ENCODE measurements at regions of chr16 and their contacts with region 1.

Region 1: DNA sequence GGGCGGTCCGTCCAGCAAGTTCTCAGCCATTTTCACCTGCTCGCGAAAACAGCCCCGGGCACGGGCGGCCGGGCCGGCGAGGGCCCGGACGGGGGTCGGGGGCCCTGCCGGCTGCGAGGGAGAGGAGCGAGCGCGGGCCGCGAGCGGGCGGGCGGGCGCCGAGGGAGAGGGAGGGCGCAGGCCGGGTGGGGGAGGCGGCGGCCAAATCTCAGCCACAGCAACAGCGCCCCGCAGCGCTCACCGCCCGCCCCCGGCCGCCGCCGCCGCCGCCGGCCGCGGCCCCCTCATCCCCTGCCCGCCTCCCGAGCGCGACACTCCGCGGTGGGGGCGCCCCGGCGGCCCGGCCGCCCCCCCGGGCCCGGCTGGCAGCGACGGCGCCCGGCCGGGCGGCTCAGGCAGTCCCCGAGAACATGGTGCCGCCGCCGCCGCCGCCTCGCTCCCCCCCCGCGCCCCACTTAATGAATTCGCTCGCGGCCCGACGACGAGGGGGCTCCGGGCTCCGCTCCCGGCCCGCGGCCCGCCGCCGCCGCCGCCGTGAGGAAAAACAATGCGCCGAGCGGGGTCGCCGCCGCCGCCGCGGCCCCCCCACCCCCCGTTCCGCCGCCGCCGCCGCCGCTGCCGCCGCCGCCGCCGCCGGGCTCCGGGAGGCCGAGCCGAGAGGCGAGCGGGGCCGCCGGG is 487 bp downstream of the CREBBP start:
- DNase-seq: peak; percentile 52
- ATAC-seq: peak; percentile 73
- H3K4me3 ChIP-seq: peak overlapping the region; percentile 76
- H3K27ac ChIP-seq: peak overlapping the region; percentile 66; the same call in 1 of the 2 replicates
- H3K4me1 ChIP-seq: peaks cover 18% of the 10 kb centered on the region
- H3K27me3 ChIP-seq: no peaks in the 10 kb centered on the region
- CTCF ChIP-seq: peak; percentile 49
- POLR2A ChIP-seq: no peak
- RAD21 ChIP-seq: peak; percentile 46

Region 2: GRCh38 chr16:3690470-3690928 is 189.5 kb before region 1 on chr16:
- CTCF ChIA-PET with region 1: interaction called, 4 read pairs
- POLR2A ChIA-PET with region 1: no interaction called
- dilution Hi-C with region 1: no loop called
- in situ Hi-C with region 1: no loop called
- intact Hi-C with region 1: loop called (anchors 1 kb)
- DNase-seq: peak; percentile 94
- ATAC-seq: peak; percentile 98
- H3K4me3 ChIP-seq: no peak overlapping the region
- H3K27ac ChIP-seq: no peak overlapping the region
- H3K4me1 ChIP-seq: peaks cover 6% of the 10 kb centered on the region
- H3K27me3 ChIP-seq: no peaks in the 10 kb centered on the region
- CTCF ChIP-seq: peak; percentile 96
- POLR2A ChIP-seq: no peak
- RAD21 ChIP-seq: peak; percentile 84

Region 3: GRCh38 chr16:3745751-3746355 is 134.2 kb before region 1 on chr16:
- CTCF ChIA-PET with region 1: no interaction called
- POLR2A ChIA-PET with region 1: no interaction called
- dilution Hi-C with region 1: no loop called
- in situ Hi-C with region 1: no loop called
- intact Hi-C with region 1: loop called (anchors 2 kb)
- DNase-seq: peak; percentile 70
- ATAC-seq: peak; percentile 70
- H3K4me3 ChIP-seq: no peak overlapping the region
- H3K27ac ChIP-seq: no peak overlapping the region
- H3K4me1 ChIP-seq: peaks cover 7% of the 10 kb centered on the region
- H3K27me3 ChIP-seq: no peaks in the 10 kb centered on the region
- CTCF ChIP-seq: no peak
- POLR2A ChIP-seq: no peak
- RAD21 ChIP-seq: no peak

Region 4: GRCh38 chr16:3774156-3774767 is 105.8 kb before region 1 on chr16:
- CTCF ChIA-PET with region 1: no interaction called
- POLR2A ChIA-PET with region 1: no interaction called
- dilution Hi-C with region 1: no loop called
- in situ Hi-C with region 1: no loop called
- intact Hi-C with region 1: loop called (anchors 5 kb)
- DNase-seq: peak; percentile 43
- ATAC-seq: peak; percentile 64
- H3K4me3 ChIP-seq: no peak overlapping the region
- H3K27ac ChIP-seq: peak overlapping the region; percentile 18; the same call in 1 of the 2 replicates
- H3K4me1 ChIP-seq: peaks cover 5% of the 10 kb centered on the region
- H3K27me3 ChIP-seq: no peaks in the 10 kb centered on the region
- CTCF ChIP-seq: no peak
- POLR2A ChIP-seq: no peak
- RAD21 ChIP-seq: no peak

Region 5: GRCh38 chr16:3868556-3868955 is 11.5 kb before region 1 on chr16:
- CTCF ChIA-PET with region 1: no interaction called
- POLR2A ChIA-PET with region 1: no interaction called
- dilution Hi-C with region 1: no loop called
- in situ Hi-C with region 1: no loop called
- intact Hi-C with region 1: no loop called
- DNase-seq: no peak
- ATAC-seq: no peak
- H3K4me3 ChIP-seq: no peak overlapping the region
- H3K27ac ChIP-seq: no peak overlapping the region
- H3K4me1 ChIP-seq: peaks cover 21% of the 10 kb centered on the region
- H3K27me3 ChIP-seq: no peaks in the 10 kb centered on the region
- CTCF ChIP-seq: no peak
- POLR2A ChIP-seq: no peak
- RAD21 ChIP-seq: no peak

Measured in IMR-90 (cell line).